GM12878 (cell line): ENCODE measurements at regions of chr15 and their contacts with region 1.

Region 1: GRCh38 chr15:51622604-51623370 is at the start of gene DMXL2:
- DNase-seq: no peak
- ATAC-seq: peak; percentile 62
- H3K4me3 ChIP-seq: peak within 1 kb of the TSS; percentile 75
- H3K27ac ChIP-seq: peak within 1 kb of the TSS; percentile 64
- H3K4me1 ChIP-seq: peaks cover 30% of the 10 kb centered on the region
- H3K27me3 ChIP-seq: no peaks in the 10 kb centered on the region
- CTCF ChIP-seq: no peak
- EP300 ChIP-seq: no peak
- POLR2A ChIP-seq: peak; percentile 64; the same call in 1 of the 2 replicates
- RAD21 ChIP-seq: no peak
- polyA plus RNA-seq, gene DMXL2: 8.5 to 12.8 TPM

Region 2: GRCh38 chr15:51536965-51537574 is 85.7 kb before region 1 on chr15:
- CTCF ChIA-PET with region 1: interaction called, 35 read pairs
- POLR2A ChIA-PET with region 1: interaction called, 3 read pairs
- RAD21 ChIA-PET with region 1: interaction called, 20 read pairs
- SMC1A ChIA-PET with region 1: interaction called, 16 read pairs
- in situ Hi-C with region 1: no loop called
- intact Hi-C with region 1: loop called (anchors 2 kb)
- DNase-seq: no peak
- ATAC-seq: peak; percentile 53; the same call in 1 of the 3 replicates
- H3K4me3 ChIP-seq: no peak overlapping the region
- H3K27ac ChIP-seq: no peak overlapping the region
- H3K4me1 ChIP-seq: no peaks in the 10 kb centered on the region
- H3K27me3 ChIP-seq: no peaks in the 10 kb centered on the region
- CTCF ChIP-seq: peak; percentile 50 to 69 (median 56)
- EP300 ChIP-seq: no peak
- POLR2A ChIP-seq: no peak
- RAD21 ChIP-seq: peak; percentile 43

Region 3: GRCh38 chr15:51658670-51659069 is 35.9 kb after region 1 on chr15:
- CTCF ChIA-PET with region 1: no interaction called
- POLR2A ChIA-PET with region 1: no interaction called
- RAD21 ChIA-PET with region 1: no interaction called
- SMC1A ChIA-PET with region 1: no interaction called
- in situ Hi-C with region 1: no loop called
- intact Hi-C with region 1: no loop called
- DNase-seq: no peak
- ATAC-seq: peak; percentile 33; the same call in 2 of the 3 replicates
- H3K4me3 ChIP-seq: no peak overlapping the region
- H3K27ac ChIP-seq: no peak overlapping the region
- H3K4me1 ChIP-seq: no peaks in the 10 kb centered on the region
- H3K27me3 ChIP-seq: no peaks in the 10 kb centered on the region
- CTCF ChIP-seq: no peak
- EP300 ChIP-seq: no peak
- POLR2A ChIP-seq: no peak
- RAD21 ChIP-seq: no peak

Region 4: DNA sequence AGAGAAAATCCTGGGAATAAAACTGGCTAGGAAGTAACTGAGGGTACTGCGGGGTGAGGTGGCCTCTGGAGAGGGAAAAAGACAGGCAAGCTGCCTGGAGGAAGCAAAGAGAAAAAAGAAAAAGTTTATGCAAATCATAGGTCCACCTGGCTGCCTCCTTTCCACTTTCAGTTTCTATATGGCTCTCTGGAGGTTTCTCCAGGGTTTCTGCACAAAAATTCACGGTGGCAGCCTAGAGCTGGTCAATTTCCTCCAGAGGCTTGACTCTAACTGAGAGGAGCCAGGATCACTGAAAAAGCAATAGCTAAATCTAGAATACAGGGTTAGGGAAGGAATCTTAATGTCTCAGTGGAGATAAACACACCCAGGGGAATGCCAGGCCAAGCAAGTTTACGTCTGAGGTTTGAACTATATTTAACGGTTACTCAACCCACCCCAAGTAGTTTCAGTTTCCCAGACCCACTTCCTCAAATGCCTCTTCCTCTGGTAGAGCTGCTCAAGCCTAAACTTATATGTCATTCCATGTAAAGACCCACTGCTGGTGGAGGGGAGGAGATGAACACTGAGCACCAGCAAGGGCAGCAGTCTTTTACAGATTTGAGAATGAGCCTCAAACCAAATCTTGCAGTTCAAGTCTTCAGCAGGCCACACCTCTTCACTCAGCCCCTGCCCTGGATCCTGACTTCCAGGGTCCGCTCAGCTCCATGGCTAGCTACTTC is 108.9 kb after region 1 on chr15:
- CTCF ChIA-PET with region 1: interaction called, 9 read pairs
- POLR2A ChIA-PET with region 1: interaction called, 11 read pairs
- RAD21 ChIA-PET with region 1: interaction called, 21 read pairs
- SMC1A ChIA-PET with region 1: interaction called, 18 read pairs
- in situ Hi-C with region 1: no loop called
- intact Hi-C with region 1: loop called (anchors 10 kb)
- DNase-seq: peak; percentile 90
- ATAC-seq: peak; percentile 61
- H3K4me3 ChIP-seq: peak overlapping the region; percentile 63
- H3K27ac ChIP-seq: peak overlapping the region; percentile 94
- H3K4me1 ChIP-seq: peaks cover 57% of the 10 kb centered on the region
- H3K27me3 ChIP-seq: no peaks in the 10 kb centered on the region
- CTCF ChIP-seq: no peak
- EP300 ChIP-seq: peak; percentile 49 to 70; a peak in 3 of 4 replicates
- POLR2A ChIP-seq: 0 out of 2 replicates have a peak, but pooled peaks have one; percentile 38
- RAD21 ChIP-seq: no peak; the same call in 1 of the 2 replicates

Region 5: GRCh38 chr15:51737280-51738017 is 114.7 kb after region 1 on chr15 and contains the start of gene LYSMD2:
- CTCF ChIA-PET with region 1: interaction called, 9 read pairs
- POLR2A ChIA-PET with region 1: interaction called, 11 read pairs
- RAD21 ChIA-PET with region 1: interaction called, 21 read pairs
- SMC1A ChIA-PET with region 1: interaction called, 18 read pairs
- in situ Hi-C with region 1: no loop called
- intact Hi-C with region 1: loop called (anchors 10 kb)
- DNase-seq: no peak
- ATAC-seq: peak; percentile 46
- H3K4me3 ChIP-seq: peak within 1 kb of the TSS; percentile 77
- H3K27ac ChIP-seq: peak within 1 kb of the TSS; percentile 94
- H3K4me1 ChIP-seq: peaks cover 25% of the 10 kb centered on the region
- H3K27me3 ChIP-seq: no peaks in the 10 kb centered on the region
- CTCF ChIP-seq: no peak
- EP300 ChIP-seq: no peak; a peak in 1 of 4 replicates
- POLR2A ChIP-seq: peak; percentile 63
- RAD21 ChIP-seq: no peak
- polyA plus RNA-seq, gene LYSMD2: 30.5 to 61.3 TPM